ENCODE measurements at regions of chr2 and their contacts with region 1.

Region 1: GRCh38 chr2:28810384-28811285 is at the start of gene SPDYA:
- DNase-seq: peak; percentile 52 to 89 (median 76)
- ATAC-seq: peak; percentile 92
- H3K4me3 ChIP-seq: peak within 1 kb of the TSS; percentile 62 to 69
- H3K4me3 Mint-ChIP-seq: peak within 1 kb of the TSS; percentile 86
- H3K27ac ChIP-seq: peak within 1 kb of the TSS; percentile 24 to 69
- H3K27ac Mint-ChIP-seq: no peak within 1 kb of the TSS
- H3K4me1 ChIP-seq: peaks cover 6% of the 10 kb centered on the region
- H3K4me1 Mint-ChIP-seq: peaks cover 18% of the 10 kb centered on the region
- H3K27me3 ChIP-seq: no peaks in the 10 kb centered on the region
- H3K27me3 Mint-ChIP-seq: no peaks in the 10 kb centered on the region
- CTCF ChIP-seq: no peak
- total RNA-seq, gene SPDYA: 11.8 to 12.4 TPM

Region 2: DNA sequence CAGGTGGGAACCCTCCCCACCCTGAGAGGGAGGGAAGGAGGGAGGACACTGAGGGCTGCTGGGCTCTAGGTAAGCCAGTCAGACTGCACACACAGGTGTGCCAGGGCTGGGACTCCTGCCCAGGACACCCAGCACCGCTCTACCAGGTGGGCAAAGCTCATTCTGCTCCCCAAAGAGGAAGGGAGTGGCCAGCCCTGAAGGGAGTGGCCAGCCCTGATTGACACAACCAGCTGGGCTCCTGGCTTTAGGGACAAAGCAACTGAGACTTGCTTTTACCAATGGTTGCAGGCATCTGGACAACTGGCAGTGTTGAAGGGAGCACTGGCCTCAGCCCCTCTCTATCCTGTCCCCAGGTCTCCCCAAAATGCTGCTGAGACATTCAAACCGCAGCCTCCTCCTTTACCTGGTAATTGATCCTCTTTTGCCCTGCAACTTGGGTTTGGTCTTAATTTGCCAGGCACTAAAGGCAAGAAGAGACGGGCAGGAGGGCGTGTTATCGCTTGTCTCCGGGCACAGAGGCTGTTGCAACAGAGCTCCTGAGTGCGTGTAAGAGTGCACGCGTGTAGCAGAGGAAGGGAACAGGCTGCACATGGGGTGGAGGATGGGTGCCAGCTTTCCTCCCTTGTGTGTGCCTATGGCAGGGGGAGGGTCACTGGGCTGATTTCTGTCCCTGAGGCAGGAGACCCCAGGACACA is 432.5 kb before region 1 on chr2:
- CTCF ChIA-PET with region 1: no interaction called
- POLR2A ChIA-PET with region 1: no interaction called
- intact Hi-C with region 1: no loop called
- DNase-seq: no peak
- ATAC-seq: peak; percentile 14
- H3K4me3 ChIP-seq: no peak overlapping the region
- H3K4me3 Mint-ChIP-seq: no peak overlapping the region
- H3K27ac ChIP-seq: peak overlapping the region in 1 of 2 experiments; percentile 17
- H3K27ac Mint-ChIP-seq: peak overlapping the region; percentile 10
- H3K4me1 ChIP-seq: peaks cover 22% of the 10 kb centered on the region
- H3K4me1 Mint-ChIP-seq: peaks cover 20% of the 10 kb centered on the region
- H3K27me3 ChIP-seq: no peaks in the 10 kb centered on the region
- H3K27me3 Mint-ChIP-seq: no peaks in the 10 kb centered on the region
- CTCF ChIP-seq: no peak

Region 3: DNA sequence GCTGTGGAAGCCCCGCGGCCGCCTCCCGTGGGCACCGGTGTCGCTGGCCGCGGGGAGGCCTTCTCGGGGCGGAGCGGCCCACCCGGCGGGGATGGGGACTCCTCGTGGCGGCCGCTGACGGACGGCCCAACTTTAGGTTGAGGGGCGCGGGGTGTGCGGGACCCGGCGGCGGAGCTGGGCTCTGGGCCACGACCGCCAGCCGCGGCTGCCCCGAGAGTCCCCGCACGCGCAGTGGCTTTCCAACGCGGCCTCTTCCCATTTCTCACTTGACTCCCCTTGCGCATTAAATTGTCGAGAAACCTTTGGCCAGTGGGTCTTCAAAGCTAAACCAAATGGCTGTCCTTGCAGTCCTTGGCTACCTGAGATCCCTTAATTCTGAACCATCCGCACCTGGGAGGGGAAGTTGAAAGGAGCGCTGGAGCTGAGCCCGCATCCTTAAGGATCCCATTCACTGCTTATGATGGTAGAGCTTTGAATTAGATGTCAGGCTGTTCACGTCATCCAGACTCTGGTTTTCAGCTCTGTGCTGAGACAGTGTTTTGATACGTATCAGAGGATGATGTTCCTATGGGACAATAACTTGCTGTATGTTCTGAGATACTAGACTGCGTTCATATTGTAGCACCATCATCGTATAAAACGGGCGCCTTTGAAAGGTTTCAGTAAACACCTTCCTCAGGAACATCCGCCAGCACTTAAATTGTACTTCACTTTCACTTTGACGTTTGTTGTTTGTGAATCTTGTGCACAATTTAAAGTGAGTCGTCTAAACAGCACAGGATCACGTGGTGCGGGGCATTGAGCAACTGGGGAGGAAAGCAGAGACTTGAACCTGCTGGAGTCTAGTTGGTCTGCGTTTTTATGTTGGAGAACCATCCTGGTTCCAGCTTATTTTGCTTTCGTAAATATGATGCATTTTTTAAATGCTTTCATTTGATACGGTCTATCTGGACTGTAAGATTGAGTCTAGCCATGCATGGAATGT is 305.5 kb after region 1 on chr2:
- CTCF ChIA-PET with region 1: no interaction called
- POLR2A ChIA-PET with region 1: no interaction called
- intact Hi-C with region 1: loop called in 1 of 2 experiments (anchors 5 kb)
- DNase-seq: peak; percentile 43 to 89 (median 73)
- ATAC-seq: peak; percentile 59
- H3K4me3 ChIP-seq: peak overlapping the region; percentile 80 to 82
- H3K4me3 Mint-ChIP-seq: peak overlapping the region; percentile 91
- H3K27ac ChIP-seq: peak overlapping the region; percentile 86 to 92
- H3K27ac Mint-ChIP-seq: peak overlapping the region; percentile 95
- H3K4me1 ChIP-seq: peaks cover 39% of the 10 kb centered on the region
- H3K4me1 Mint-ChIP-seq: peaks cover 54% of the 10 kb centered on the region
- H3K27me3 ChIP-seq: no peaks in the 10 kb centered on the region
- H3K27me3 Mint-ChIP-seq: no peaks in the 10 kb centered on the region
- CTCF ChIP-seq: no peak